Keratinocyte (primary cell): ENCODE measurements at regions of chr17 and their contacts with region 1.

Region 1: DNA sequence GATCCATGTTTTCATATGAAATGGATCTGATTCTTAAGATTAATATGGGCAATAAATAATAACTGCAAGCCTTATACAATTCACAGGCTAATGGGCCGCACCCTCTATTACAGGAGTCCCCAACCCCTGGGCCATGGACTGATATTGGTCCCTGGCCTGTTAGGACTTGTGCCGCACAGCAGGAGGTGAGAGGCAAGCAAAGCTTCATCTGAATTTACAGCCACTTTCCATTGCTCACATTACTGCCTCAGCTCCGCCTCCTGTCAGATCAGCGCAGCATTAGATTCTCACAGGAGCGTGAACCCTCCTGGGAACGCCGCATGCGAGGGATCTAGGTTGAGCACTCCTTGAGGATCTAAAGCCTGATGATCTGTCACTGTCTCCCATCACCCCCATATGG is 26.8 kb downstream of the METTL16 start:
- DNase-seq: peak; percentile 41
- H3K4me3 ChIP-seq: peak overlapping the region; percentile 6 to 71 (median 24)
- H3K27ac ChIP-seq: peak overlapping the region; percentile 65
- H3K4me1 ChIP-seq: peaks cover 20% of the 10 kb centered on the region
- H3K27me3 ChIP-seq: no peaks in the 10 kb centered on the region
- CTCF ChIP-seq: no peak

Region 2: GRCh38 chr17:2416010-2416734 is 68.7 kb before region 1 on chr17:
- dilution Hi-C with region 1: no loop called
- DNase-seq: no peak
- H3K4me3 ChIP-seq: no peak overlapping the region
- H3K27ac ChIP-seq: peak overlapping the region; percentile 22
- H3K4me1 ChIP-seq: no peaks in the 10 kb centered on the region
- H3K27me3 ChIP-seq: no peaks in the 10 kb centered on the region
- CTCF ChIP-seq: peak; percentile 87 to 98 (median 91)

Region 3: DNA sequence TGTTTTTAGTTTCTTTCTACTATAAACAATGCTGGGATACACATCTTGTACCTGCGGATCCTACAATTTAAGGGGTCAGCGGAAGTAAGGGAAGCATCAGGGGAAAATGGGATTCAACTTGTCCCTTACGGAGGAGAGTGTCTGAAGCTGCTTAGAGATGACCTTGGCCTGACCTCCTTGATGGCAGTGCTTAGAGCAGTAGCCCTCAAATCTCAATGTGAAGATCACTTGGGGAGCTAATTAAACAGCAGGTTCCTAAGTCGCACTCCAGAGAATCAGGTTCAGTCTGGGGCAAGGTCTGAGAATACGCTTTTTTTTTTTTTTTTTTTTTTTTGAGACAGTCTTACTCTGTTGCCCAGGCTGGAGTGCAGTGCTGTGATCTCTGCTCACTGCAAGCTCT is 36.4 kb after region 1 on chr17:
- dilution Hi-C with region 1: no loop called
- DNase-seq: no peak
- H3K4me3 ChIP-seq: no peak overlapping the region
- H3K27ac ChIP-seq: no peak overlapping the region
- H3K4me1 ChIP-seq: no peaks in the 10 kb centered on the region
- H3K27me3 ChIP-seq: no peaks in the 10 kb centered on the region
- CTCF ChIP-seq: no peak

Region 4: GRCh38 chr17:2624292-2624731 is 139.4 kb after region 1 on chr17:
- dilution Hi-C with region 1: loop called (anchors 25 kb)
- DNase-seq: no peak
- H3K4me3 ChIP-seq: no peak overlapping the region
- H3K27ac ChIP-seq: no peak overlapping the region
- H3K4me1 ChIP-seq: no peaks in the 10 kb centered on the region
- H3K27me3 ChIP-seq: no peaks in the 10 kb centered on the region
- CTCF ChIP-seq: no peak